ENCODE measurements at regions of chr6 and their contacts with region 1.

Region 1: DNA sequence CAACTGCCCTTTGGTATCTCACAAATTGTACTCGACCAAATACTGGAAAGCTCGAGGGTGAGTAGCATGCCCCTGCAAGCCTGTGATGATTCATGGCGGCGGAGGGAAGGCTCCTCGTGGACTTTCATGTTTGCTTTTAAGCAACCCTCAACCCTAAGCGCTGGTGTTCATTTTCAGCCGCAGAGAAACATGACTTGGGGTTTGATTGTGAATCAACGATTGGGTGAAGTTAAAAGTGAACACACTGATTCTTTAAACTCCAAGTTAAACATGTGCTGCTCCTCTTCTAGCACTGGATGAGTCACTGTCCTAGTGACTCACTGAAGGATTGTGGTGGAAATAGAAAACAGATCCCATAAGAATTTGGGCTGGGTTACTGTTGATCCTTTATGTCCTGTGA is 8.3 kb downstream of the CD109 start:
- DNase-seq: peak; percentile 78 to 83
- H3K4me3 ChIP-seq: peak overlapping the region; percentile 11; the same call in 1 of the 2 replicates
- H3K27ac ChIP-seq: peak overlapping the region; percentile 80
- H3K4me1 ChIP-seq: peaks cover 26% of the 10 kb centered on the region
- H3K27me3 ChIP-seq: no peaks in the 10 kb centered on the region
- CTCF ChIP-seq: no peak

Region 2: DNA sequence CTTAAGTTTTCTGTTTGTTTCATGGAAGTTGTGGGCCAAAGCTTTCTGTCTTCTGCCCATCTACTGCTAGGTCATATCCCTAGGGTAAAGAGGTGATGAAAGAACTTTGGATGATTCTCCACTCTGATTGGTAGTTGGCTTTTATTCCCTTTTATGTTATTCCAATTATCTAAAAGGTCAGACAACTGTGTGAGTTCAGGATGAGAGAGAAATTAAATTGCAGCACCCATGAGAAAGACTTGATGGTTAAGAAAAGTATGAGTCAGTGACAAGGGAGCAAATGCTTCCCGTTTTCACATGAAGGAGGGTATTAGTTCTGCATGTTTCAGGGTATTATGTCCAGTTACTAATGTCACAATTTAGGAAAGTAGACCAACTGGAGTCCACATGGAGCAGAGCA is 128.1 kb after region 1 on chr6:
- CTCF ChIA-PET with region 1: no interaction called
- POLR2A ChIA-PET with region 1: no interaction called
- intact Hi-C with region 1: no loop called
- DNase-seq: no peak
- H3K4me3 ChIP-seq: no peak overlapping the region
- H3K27ac ChIP-seq: no peak overlapping the region
- H3K4me1 ChIP-seq: no peaks in the 10 kb centered on the region
- H3K27me3 ChIP-seq: no peaks in the 10 kb centered on the region
- CTCF ChIP-seq: no peak

Region 3: DNA sequence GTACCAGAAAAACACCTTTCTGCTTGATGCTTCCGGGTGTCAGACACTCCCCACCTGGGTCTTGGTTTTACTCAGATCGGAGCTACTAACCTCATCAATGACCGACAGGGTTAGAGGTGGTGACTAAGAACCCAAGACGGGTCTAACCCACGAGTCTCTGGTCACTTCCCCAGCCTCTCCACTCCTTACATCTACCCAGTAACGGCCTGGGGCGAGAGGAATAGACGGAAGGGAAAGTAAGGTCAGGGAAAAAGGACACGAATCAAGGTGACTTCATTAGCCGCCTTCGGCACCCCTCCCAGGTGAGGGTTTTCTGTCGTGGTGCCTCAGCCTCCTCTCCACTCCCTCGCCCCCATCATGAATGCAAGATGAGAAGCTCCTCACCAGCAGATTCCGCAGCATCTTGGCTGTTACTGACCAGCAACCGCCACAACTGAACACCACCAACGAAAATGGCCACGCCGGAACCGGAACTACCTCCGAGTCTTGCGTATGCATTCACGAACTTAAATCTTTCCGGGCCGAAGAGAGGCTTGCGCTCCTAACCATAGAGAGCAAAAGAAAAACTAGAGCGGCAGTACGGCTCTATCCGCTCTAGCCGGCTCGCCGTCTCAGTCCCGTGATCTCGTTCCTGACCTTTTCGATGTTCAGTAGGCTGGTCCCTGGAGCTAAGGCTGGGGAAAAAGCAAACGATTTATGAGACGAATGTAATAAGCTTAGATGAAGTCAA is 1539.2 kb after region 1 on chr6 and contains the start of gene COX7A2:
- CTCF ChIA-PET with region 1: no interaction called
- POLR2A ChIA-PET with region 1: interaction called, 14 read pairs
- intact Hi-C with region 1: no loop called
- DNase-seq: peak; percentile 84 to 93
- H3K4me3 ChIP-seq: peak within 1 kb of the TSS; percentile 84
- H3K27ac ChIP-seq: peak within 1 kb of the TSS; percentile 82
- H3K4me1 ChIP-seq: peaks cover 24% of the 10 kb centered on the region
- H3K27me3 ChIP-seq: no peaks in the 10 kb centered on the region
- CTCF ChIP-seq: no peak
- total RNA-seq, gene COX7A2: 484 and 524 TPM in 2 replicates

Measured in PC-9 (cell line).